RWPE1 (cell line): ENCODE measurements at regions of chr2 and their contacts with region 1.

Region 1: DNA sequence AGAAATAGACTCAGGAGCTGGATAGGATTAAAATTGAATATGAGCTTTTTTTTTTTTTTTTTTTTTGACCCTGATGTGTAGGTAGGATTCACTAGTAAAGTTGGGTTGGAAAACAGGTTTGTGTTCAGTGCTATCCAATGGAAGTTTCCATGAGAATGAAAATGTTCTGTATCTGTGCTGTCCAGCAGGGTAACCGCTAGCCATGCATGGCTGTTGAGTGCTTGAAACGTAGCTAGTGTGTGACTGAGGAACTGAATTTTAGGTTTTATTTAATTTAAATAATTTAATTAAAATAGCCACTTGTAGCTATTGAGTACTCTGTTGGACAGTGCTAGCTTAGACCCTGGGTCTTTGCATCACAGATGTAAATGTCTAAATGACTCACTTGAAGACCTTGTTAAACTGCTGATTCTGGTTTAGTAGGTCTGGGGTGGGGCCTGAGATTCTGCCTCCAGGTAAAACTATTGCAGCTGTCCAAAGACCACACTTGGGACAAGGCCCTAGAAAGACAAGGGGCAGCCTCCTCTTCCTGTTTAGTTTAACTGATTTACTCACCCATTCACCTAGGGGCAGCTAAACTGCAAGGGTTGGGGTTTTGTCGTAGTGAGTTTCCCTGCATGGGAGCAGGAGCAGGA is 84.7 kb upstream of the STON1 start:
- DNase-seq: peak; percentile 19
- H3K27ac ChIP-seq: no peak overlapping the region
- CTCF ChIP-seq: no peak

Region 2: GRCh38 chr2:48313036-48313877 is 132.0 kb before region 1 on chr2:
- CTCF ChIA-PET with region 1: no interaction called
- POLR2A ChIA-PET with region 1: interaction called, 12 read pairs
- DNase-seq: no peak
- H3K27ac ChIP-seq: peak overlapping the region; percentile 98
- CTCF ChIP-seq: no peak

Region 3: DNA sequence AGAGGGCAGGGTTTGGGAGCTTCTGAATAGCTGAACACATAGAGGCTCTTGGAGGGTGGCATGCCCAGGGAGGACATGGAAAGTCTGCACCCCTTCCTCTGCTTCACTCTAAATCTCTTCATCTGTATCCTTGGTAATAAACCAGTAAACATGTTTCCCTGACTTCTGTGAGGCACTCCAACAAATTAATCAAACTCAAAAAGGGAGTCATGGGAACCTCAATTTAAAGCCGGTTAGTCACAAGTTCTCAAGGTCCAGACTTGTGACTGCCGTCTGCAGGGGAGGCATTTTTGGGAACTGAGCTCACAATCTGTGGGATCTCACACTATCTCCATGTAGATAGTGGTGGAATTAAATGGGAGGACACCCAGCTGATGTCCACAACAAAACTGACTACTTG is 51.6 kb after region 1 on chr2:
- CTCF ChIA-PET with region 1: no interaction called
- POLR2A ChIA-PET with region 1: no interaction called
- DNase-seq: no peak
- H3K27ac ChIP-seq: no peak overlapping the region
- CTCF ChIP-seq: no peak